ENCODE measurements at regions of chr3 and their contacts with region 1.

Region 1: GRCh38 chr3:74763830-74764229 is 149.4 kb upstream of the CNTN3 start:
- DNase-seq: no peak
- H3K4me3 ChIP-seq: no peak overlapping the region
- H3K27ac ChIP-seq: no peak overlapping the region
- H3K4me1 ChIP-seq: no peaks in the 10 kb centered on the region
- H3K27me3 ChIP-seq: no peaks in the 10 kb centered on the region
- CTCF ChIP-seq: no peak
- POLR2A ChIP-seq: no peak

Region 2: GRCh38 chr3:73656241-73656890 is 1107.5 kb before region 1 on chr3:
- intact Hi-C with region 1: no loop called
- DNase-seq: peak in 1 of 2 donors; percentile 82
- H3K4me3 ChIP-seq: no peak overlapping the region
- H3K27ac ChIP-seq: peak overlapping the region; percentile 28 to 48
- H3K4me1 ChIP-seq: no peaks in the 10 kb centered on the region
- H3K27me3 ChIP-seq: no peaks in the 10 kb centered on the region
- CTCF ChIP-seq: no peak
- POLR2A ChIP-seq: no peak

Region 3: DNA sequence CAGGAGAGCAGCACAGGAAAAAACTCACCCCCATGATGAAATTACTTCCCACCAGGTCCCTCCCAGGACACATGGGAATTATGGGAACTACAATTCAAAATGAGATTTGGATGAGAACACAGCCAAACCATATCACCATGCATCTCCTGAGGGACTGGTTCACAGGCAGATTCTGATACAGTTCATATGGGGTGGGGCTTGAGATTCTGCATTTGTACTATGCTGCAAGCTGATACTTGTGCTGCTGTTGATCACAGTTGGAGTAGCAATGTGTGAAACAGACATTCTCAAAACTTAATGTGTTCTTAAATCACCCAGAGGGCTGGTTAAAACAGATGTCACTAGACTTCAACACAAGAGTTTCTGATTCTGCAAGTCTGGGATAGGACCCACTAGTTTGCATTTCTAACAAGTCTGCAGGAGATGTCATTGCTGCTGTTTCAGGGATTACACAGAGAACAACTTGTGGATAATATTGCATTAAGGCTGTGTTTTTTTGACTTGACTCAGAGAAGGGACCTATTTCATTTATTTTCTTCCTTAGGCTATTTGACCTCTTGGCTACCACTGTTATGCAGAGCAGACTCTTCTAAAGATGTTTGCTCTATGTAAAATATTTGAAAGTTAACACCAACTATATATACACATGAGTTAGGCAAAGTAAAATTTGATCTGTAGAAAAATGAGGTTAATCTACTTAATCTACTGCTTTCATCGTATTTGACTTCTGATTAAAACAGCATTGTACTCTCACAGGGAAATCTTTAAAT is 44.9 kb after region 1 on chr3:
- intact Hi-C with region 1: loop called (anchors 2 kb)
- DNase-seq: no peak
- H3K4me3 ChIP-seq: no peak overlapping the region
- H3K27ac ChIP-seq: no peak overlapping the region
- H3K4me1 ChIP-seq: no peaks in the 10 kb centered on the region
- H3K27me3 ChIP-seq: no peaks in the 10 kb centered on the region
- CTCF ChIP-seq: no peak
- POLR2A ChIP-seq: no peak

Measured in breast epithelium (tissue), 4 donors.